ENCODE measurements at regions of chr7 and their contacts with region 1.

Region 1: GRCh38 chr7:155618708-155619633 is 25.5 kb upstream of the RBM33 start:
- DNase-seq: no peak
- ATAC-seq: no peak
- H3K4me3 ChIP-seq: no peak overlapping the region
- H3K4me3 Mint-ChIP-seq: no peak overlapping the region
- H3K27ac ChIP-seq: no peak overlapping the region
- H3K27ac Mint-ChIP-seq: peak overlapping the region in 1 of 9 donors; percentile 18
- H3K4me1 ChIP-seq: no peaks in the 10 kb centered on the region
- H3K4me1 Mint-ChIP-seq: no peaks in the 10 kb centered on the region
- H3K27me3 ChIP-seq: no peaks in the 10 kb centered on the region
- H3K27me3 Mint-ChIP-seq: peaks cover 0 to 18% (median 0%) of the 10 kb centered on the region in 5 donors

Region 2: DNA sequence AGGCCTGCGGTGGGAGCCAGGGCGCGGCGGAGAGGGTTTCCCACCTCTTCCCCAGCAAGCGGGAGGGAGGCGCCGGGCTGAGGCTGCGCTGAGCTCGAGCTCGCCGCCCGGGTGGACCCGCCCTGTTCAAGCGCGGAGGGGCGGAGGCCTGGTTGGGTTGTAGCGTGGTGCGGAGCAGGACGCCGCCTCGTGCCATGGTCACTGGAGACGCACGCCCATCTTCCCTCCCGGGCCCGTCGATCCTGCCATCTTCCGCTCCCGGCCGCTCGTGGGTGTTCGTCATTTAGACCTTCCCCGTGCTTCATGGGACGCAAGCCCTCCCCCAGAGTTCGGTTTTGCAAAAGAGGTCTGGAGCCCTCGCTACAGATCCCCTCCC is 170.4 kb before region 1 on chr7:
- CTCF ChIA-PET with region 1: no interaction called
- POLR2A ChIA-PET with region 1: no interaction called
- intact Hi-C with region 1: no loop called
- DNase-seq: no peak
- ATAC-seq: no peak
- H3K4me3 ChIP-seq: no peak overlapping the region
- H3K4me3 Mint-ChIP-seq: peak overlapping the region in 1 of 10 donors; percentile 62
- H3K27ac ChIP-seq: no peak overlapping the region
- H3K27ac Mint-ChIP-seq: peak overlapping the region in 1 of 9 donors; percentile 71
- H3K4me1 ChIP-seq: no peaks in the 10 kb centered on the region
- H3K4me1 Mint-ChIP-seq: peaks cover 0 to 20% (median 16%) of the 10 kb centered on the region in 7 donors
- H3K27me3 ChIP-seq: no peaks in the 10 kb centered on the region
- H3K27me3 Mint-ChIP-seq: peaks cover 52 to 81% (median 61%) of the 10 kb centered on the region in 5 donors

Region 3: GRCh38 chr7:155567646-155568334 is 51.2 kb before region 1 on chr7:
- CTCF ChIA-PET with region 1: no interaction called
- POLR2A ChIA-PET with region 1: no interaction called
- intact Hi-C with region 1: no loop called
- DNase-seq: no peak
- ATAC-seq: no peak
- H3K4me3 ChIP-seq: no peak overlapping the region
- H3K4me3 Mint-ChIP-seq: no peak overlapping the region
- H3K27ac ChIP-seq: no peak overlapping the region
- H3K27ac Mint-ChIP-seq: no peak overlapping the region
- H3K4me1 ChIP-seq: no peaks in the 10 kb centered on the region
- H3K4me1 Mint-ChIP-seq: peaks cover 0 to 1% (median 0%) of the 10 kb centered on the region in 7 donors
- H3K27me3 ChIP-seq: no peaks in the 10 kb centered on the region
- H3K27me3 Mint-ChIP-seq: peaks cover 0 to 9% (median 0%) of the 10 kb centered on the region in 5 donors

Region 4: GRCh38 chr7:155669717-155670505 is 50.9 kb after region 1 on chr7:
- CTCF ChIA-PET with region 1: no interaction called
- POLR2A ChIA-PET with region 1: no interaction called
- intact Hi-C with region 1: loop called in 1 of 2 experiments (anchors 10 kb)
- DNase-seq: no peak
- ATAC-seq: no peak
- H3K4me3 ChIP-seq: no peak overlapping the region
- H3K4me3 Mint-ChIP-seq: peak overlapping the region in 1 of 10 donors; percentile 36
- H3K27ac ChIP-seq: no peak overlapping the region
- H3K27ac Mint-ChIP-seq: peak overlapping the region in 7 of 9 donors; percentile 9 to 51 (median 32)
- H3K4me1 ChIP-seq: peaks cover 3 to 10% of the 10 kb centered on the region in 2 donors
- H3K4me1 Mint-ChIP-seq: peaks cover 42 to 77% (median 69%) of the 10 kb centered on the region in 7 donors
- H3K27me3 ChIP-seq: no peaks in the 10 kb centered on the region
- H3K27me3 Mint-ChIP-seq: no peaks in the 10 kb centered on the region

Measured in naive thymus-derived CD4-positive, alpha-beta T cell (primary cell).